CD14-positive monocyte (primary cell): ENCODE measurements at regions of chr17 and their contacts with region 1.

Region 1: GRCh38 chr17:55527540-55528118 is 16.4 kb upstream of the SMIM36 start:
- DNase-seq: peak in 2 of 3 donors; percentile 8 to 20
- H3K4me3 ChIP-seq: no peak overlapping the region
- H3K4me3 Mint-ChIP-seq: no peak overlapping the region
- H3K27ac ChIP-seq: no peak overlapping the region
- H3K27ac Mint-ChIP-seq: no peak overlapping the region
- H3K4me1 ChIP-seq: no peaks in the 10 kb centered on the region
- H3K4me1 Mint-ChIP-seq: peaks cover 8% of the 10 kb centered on the region
- H3K27me3 ChIP-seq: no peaks in the 10 kb centered on the region
- H3K27me3 Mint-ChIP-seq: peaks cover 0 to 3% (median 1%) of the 10 kb centered on the region in 3 donors
- CTCF ChIP-seq: peak; percentile 32

Region 2: GRCh38 chr17:55487695-55488429 is 39.8 kb before region 1 on chr17:
- intact Hi-C with region 1: no loop called
- DNase-seq: no peak
- H3K4me3 ChIP-seq: no peak overlapping the region
- H3K4me3 Mint-ChIP-seq: no peak overlapping the region
- H3K27ac ChIP-seq: no peak overlapping the region
- H3K27ac Mint-ChIP-seq: no peak overlapping the region
- H3K4me1 ChIP-seq: no peaks in the 10 kb centered on the region
- H3K4me1 Mint-ChIP-seq: no peaks in the 10 kb centered on the region
- H3K27me3 ChIP-seq: peaks cover 0 to 2% of the 10 kb centered on the region in 2 donors
- H3K27me3 Mint-ChIP-seq: peaks cover 0 to 17% (median 3%) of the 10 kb centered on the region in 3 donors
- CTCF ChIP-seq: no peak

Region 3: DNA sequence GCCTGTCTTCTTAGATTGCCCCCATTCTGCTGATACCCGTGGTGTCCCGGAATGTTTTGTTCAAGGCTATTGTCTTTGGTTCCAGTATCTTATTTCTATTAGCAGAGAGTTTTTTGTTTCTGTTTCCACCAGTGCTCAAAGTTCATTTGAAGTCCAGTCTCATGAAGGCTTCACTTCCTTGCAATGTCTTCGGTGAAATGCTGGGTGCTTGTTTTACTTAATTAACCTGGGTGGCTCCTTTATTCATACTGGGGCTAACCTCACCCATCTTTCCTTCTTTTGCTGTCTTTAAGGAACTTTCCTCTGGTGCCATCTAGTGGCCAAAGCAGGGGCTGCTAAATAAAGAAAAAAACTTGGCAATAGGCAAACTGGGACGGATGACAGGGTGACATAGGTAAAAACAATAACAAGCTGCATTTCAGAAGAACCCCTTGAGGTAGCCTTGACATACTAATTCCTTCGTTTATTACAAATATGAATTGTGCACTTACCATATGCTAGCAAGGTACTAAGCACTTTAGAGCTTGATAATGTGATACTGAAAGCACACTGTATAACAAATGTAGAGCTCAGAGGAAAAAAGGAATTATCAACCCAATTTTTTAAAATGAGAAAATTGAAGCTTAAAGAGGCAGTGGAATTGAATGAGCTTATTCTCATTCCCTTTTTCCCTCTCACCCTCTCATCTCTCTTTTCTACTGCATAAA is 13.6 kb before region 1 on chr17:
- intact Hi-C with region 1: no loop called
- DNase-seq: peak; percentile 51 to 67 (median 65)
- H3K4me3 ChIP-seq: no peak overlapping the region
- H3K4me3 Mint-ChIP-seq: no peak overlapping the region
- H3K27ac ChIP-seq: no peak overlapping the region
- H3K27ac Mint-ChIP-seq: no peak overlapping the region
- H3K4me1 ChIP-seq: peaks cover 10 to 13% of the 10 kb centered on the region in 2 donors
- H3K4me1 Mint-ChIP-seq: peaks cover 3% of the 10 kb centered on the region
- H3K27me3 ChIP-seq: no peaks in the 10 kb centered on the region
- H3K27me3 Mint-ChIP-seq: peaks cover 2 to 4% (median 4%) of the 10 kb centered on the region in 3 donors
- CTCF ChIP-seq: peak; percentile 84

Region 4: GRCh38 chr17:55601874-55602364 is 74.3 kb after region 1 on chr17:
- intact Hi-C with region 1: loop called (anchors 2 kb)
- DNase-seq: peak; percentile 35 to 61 (median 53)
- H3K4me3 ChIP-seq: no peak overlapping the region
- H3K4me3 Mint-ChIP-seq: no peak overlapping the region
- H3K27ac ChIP-seq: no peak overlapping the region
- H3K27ac Mint-ChIP-seq: no peak overlapping the region
- H3K4me1 ChIP-seq: no peaks in the 10 kb centered on the region
- H3K4me1 Mint-ChIP-seq: no peaks in the 10 kb centered on the region
- H3K27me3 ChIP-seq: no peaks in the 10 kb centered on the region
- H3K27me3 Mint-ChIP-seq: peaks cover 0 to 5% (median 0%) of the 10 kb centered on the region in 3 donors
- CTCF ChIP-seq: peak; percentile 86

Region 5: GRCh38 chr17:55717898-55718735 is 190.5 kb after region 1 on chr17:
- intact Hi-C with region 1: loop called (anchors 2 to 5 kb)
- DNase-seq: peak; percentile 57 to 72 (median 67)
- H3K4me3 ChIP-seq: no peak overlapping the region
- H3K4me3 Mint-ChIP-seq: no peak overlapping the region
- H3K27ac ChIP-seq: no peak overlapping the region
- H3K27ac Mint-ChIP-seq: no peak overlapping the region
- H3K4me1 ChIP-seq: peaks cover 5 to 8% of the 10 kb centered on the region in 2 donors
- H3K4me1 Mint-ChIP-seq: peaks cover 12% of the 10 kb centered on the region
- H3K27me3 ChIP-seq: peaks cover 13 to 15% of the 10 kb centered on the region in 2 donors
- H3K27me3 Mint-ChIP-seq: peaks cover 10 to 21% (median 19%) of the 10 kb centered on the region in 3 donors
- CTCF ChIP-seq: peak; percentile 89

Region 6: GRCh38 chr17:55770148-55770870 is 242.7 kb after region 1 on chr17:
- intact Hi-C with region 1: loop called (anchors 5 to 10 kb)
- DNase-seq: peak in 2 of 3 donors; percentile 34 to 49
- H3K4me3 ChIP-seq: no peak overlapping the region
- H3K4me3 Mint-ChIP-seq: no peak overlapping the region
- H3K27ac ChIP-seq: peak overlapping the region in 1 of 2 donors; percentile 18
- H3K27ac Mint-ChIP-seq: peak overlapping the region in 4 of 7 donors; percentile 14 to 85 (median 36)
- H3K4me1 ChIP-seq: peaks cover 10 to 13% of the 10 kb centered on the region in 2 donors
- H3K4me1 Mint-ChIP-seq: peaks cover 13% of the 10 kb centered on the region
- H3K27me3 ChIP-seq: no peaks in the 10 kb centered on the region
- H3K27me3 Mint-ChIP-seq: no peaks in the 10 kb centered on the region
- CTCF ChIP-seq: peak; percentile 73